MCF 10A (cell line): ENCODE measurements at regions of chr1 and their contacts with region 1.

Region 1: DNA sequence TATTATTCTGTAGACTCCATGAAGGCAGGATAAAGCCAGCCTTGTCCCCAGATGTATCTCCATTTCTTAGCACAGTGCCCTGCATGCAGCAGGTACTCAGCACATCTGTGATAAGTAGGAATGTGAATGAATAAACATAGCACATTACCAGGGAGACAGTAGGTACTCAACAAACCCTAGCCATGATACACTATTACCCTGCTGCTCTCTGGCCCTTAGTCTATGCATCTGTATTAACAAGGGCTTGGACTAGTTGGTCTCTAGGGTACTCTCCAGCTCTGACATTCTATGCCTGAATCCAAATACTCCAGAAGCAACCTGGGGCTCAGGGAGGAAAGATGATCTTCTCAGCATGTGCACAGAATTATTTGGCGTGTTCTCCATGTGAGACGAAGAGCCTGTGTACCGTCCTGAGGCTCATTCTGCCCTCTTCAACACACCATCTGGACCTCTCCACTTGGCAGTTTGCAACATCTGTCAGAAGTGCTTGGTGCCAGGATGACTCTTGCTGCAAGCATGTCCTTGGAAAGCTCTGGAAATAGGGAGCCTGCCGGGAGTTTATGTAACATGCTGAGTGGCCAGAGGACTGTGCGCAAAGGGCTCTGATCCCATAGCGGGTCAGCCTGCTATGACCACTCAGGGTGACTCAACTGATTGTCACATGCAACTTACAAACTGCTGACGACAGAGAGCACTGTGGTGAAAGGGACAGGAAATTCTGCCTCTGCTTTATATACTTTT is 228.2 kb upstream of the USP24 start:
- DNase-seq: peak; percentile 94
- H3K4me3 Mint-ChIP-seq: no peak overlapping the region
- H3K27ac Mint-ChIP-seq: peak overlapping the region; percentile 17
- H3K4me1 Mint-ChIP-seq: peaks cover 20% of the 10 kb centered on the region
- H3K27me3 Mint-ChIP-seq: no peaks in the 10 kb centered on the region
- CTCF ChIP-seq: no peak

Region 2: DNA sequence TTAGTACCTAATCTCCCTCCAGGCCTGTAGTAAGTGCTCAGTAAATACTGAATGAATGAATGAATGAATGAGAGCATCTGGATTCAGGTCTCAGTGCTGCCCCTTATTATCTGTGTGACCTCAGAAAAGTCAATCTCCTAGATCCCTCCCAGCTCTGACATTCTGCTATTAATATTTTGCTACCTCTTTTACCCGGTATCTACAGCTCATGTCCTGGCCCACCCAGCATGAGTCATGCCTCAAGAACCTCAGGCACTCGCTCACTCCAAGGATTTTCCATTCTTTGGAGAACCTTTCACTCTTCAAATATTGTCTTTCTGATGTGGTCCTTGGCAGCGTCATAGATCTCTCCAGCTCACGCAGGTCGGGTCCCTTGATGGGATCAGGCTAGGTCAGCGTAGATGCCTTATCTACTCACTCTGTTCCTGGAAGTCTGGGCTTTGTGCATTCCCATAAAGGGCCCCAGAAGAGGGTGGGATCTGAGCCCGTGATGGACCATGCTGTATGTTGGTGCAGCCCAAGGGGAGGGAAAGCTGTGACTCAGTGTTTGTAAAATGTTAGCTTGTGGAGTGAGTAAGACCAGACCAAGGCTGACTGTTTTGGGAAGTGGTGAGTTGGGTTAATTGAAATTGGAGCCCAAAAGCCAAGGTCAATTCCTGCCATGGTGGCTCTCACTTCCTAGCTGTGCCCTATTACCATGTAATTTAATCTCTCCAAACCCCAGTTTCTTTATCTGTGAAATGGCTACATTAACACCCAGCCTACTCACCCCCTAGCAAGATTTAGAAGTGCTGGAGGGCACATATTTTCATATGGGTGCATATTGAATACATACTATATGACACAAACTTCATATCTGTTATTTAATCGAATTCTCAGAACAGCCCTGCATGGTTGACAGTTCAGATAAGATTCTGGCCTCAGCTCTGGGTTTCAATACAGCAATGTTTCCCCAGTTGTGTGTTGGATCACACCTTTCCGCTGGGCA is 14.1 kb before region 1 on chr1:
- CTCF ChIA-PET with region 1: no interaction called
- POLR2A ChIA-PET with region 1: interaction called, 4 read pairs
- intact Hi-C with region 1: loop called (anchors 1 kb)
- DNase-seq: peak; percentile 92
- H3K4me3 Mint-ChIP-seq: peak overlapping the region; percentile 3
- H3K27ac Mint-ChIP-seq: peak overlapping the region; percentile 78
- H3K4me1 Mint-ChIP-seq: peaks cover 20% of the 10 kb centered on the region
- H3K27me3 Mint-ChIP-seq: no peaks in the 10 kb centered on the region
- CTCF ChIP-seq: no peak

Region 3: GRCh38 chr1:55472784-55473183 is 29.4 kb after region 1 on chr1:
- CTCF ChIA-PET with region 1: no interaction called
- POLR2A ChIA-PET with region 1: interaction called, 3 read pairs
- intact Hi-C with region 1: loop called (anchors 2 kb)
- DNase-seq: peak; percentile 84
- H3K4me3 Mint-ChIP-seq: no peak overlapping the region
- H3K27ac Mint-ChIP-seq: peak overlapping the region; percentile 16
- H3K4me1 Mint-ChIP-seq: peaks cover 25% of the 10 kb centered on the region
- H3K27me3 Mint-ChIP-seq: no peaks in the 10 kb centered on the region
- CTCF ChIP-seq: no peak

Region 4: GRCh38 chr1:55572878-55573734 is 129.8 kb after region 1 on chr1:
- CTCF ChIA-PET with region 1: no interaction called
- POLR2A ChIA-PET with region 1: no interaction called
- intact Hi-C with region 1: no loop called
- DNase-seq: no peak
- H3K4me3 Mint-ChIP-seq: no peak overlapping the region
- H3K27ac Mint-ChIP-seq: peak overlapping the region; percentile 63
- H3K4me1 Mint-ChIP-seq: peaks cover 11% of the 10 kb centered on the region
- H3K27me3 Mint-ChIP-seq: no peaks in the 10 kb centered on the region
- CTCF ChIP-seq: no peak